Head of caudate nucleus (tissue), 42 donors: ENCODE measurements at regions of chr16 and their contacts with region 1.

Region 1: GRCh38 chr16:14285513-14286385 is 214.6 kb downstream of the MRTFB start:
- DNase-seq: peak; percentile 83 to 97 (median 93)

Region 2: DNA sequence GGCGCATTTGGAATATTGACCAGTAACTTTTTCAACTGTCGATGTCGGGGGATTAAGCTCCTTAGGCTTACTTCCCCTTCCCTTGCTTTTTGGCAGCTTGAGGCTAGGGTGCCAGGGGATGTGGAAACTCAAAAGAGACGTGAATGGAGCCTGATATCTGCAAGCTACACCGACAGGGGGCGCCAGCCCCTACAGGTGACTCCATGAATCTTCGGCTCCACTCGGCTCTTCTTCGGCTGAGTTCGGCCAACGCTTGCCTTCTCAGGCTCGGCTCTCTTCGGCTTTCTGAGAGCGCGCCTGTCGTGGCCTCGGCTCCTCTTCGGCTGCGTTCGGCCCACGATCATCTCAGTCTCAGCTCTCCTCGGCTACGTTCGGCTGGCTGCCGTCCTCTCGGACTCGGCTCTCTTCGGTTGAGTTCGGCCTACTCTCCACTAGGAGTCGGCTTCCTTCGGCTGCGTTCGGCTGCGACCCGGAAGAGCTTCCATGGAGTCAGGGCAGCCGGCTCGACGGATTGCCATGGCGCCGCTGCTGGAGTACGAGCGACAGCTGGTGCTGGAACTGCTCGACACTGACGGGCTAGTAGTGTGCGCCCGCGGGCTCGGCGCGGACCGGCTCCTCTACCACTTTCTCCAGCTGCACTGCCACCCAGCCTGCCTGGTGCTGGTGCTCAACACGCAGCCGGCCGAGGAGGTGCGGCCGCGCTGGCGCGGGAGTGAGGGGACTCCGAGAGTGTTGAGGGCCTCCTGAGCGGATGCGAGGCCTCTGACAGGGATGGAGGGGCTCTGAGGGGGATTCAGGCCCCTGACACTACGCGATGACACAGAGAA is 365.9 kb before region 1 on chr16 and contains the start of gene ERCC4:
- intact Hi-C with region 1: loop called (anchors 10 kb)
- DNase-seq: peak; percentile 97 to 100 (median 99)

Region 3: DNA sequence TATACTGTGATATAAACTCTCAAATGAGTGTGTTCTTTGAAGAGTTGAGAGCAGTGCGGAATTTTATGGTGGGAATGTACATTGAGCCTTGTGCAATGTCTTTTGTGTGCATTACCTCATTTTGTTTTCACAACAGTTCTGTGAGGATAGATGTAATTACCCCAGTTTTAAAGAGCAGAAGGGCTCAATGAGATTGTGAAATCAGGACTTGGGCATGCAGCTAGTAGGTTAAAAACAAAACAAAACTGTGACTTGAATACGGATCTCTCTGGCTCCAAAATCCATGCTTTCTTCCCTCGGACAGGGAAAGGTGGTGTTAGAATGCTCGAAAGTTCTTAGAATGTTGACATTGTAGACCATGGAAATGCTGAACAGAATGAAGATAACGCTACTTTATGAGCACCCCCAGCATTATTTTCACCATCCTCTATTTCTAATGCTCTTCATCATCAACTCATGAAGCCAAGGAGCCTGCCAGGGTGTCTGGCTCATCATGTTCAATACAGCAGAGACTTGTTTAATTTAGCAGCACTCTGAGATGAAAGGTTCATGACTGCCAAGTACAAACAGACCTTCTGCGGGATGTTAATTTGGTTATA is 197.5 kb before region 1 on chr16:
- intact Hi-C with region 1: no loop called
- DNase-seq: peak in 16 of 42 donors; percentile 8 to 78 (median 37)

Region 4: GRCh38 chr16:14300705-14301168 is 15.0 kb after region 1 on chr16:
- intact Hi-C with region 1: loop called (anchors 2 kb)
- DNase-seq: peak in 37 of 42 donors; percentile 25 to 84 (median 57)